ENCODE measurements at regions of chr1 and their contacts with region 1.

Region 1: GRCh38 chr1:201399352-201400126 is 415 bp upstream of the LAD1 start:
- DNase-seq: no peak
- H3K4me3 ChIP-seq: no peak overlapping the region
- H3K27ac ChIP-seq: no peak overlapping the region
- H3K4me1 ChIP-seq: peaks cover 0 to 9% of the 10 kb centered on the region in 2 experiments; a peak in 1 of 4 replicates
- H3K27me3 ChIP-seq: peaks cover 35% of the 10 kb centered on the region; the same call in 1 of the 2 replicates
- CTCF ChIP-seq: no peak
- EP300 ChIP-seq: no peak
- RAD21 ChIP-seq: no peak

Region 2: GRCh38 chr1:201385299-201385891 is 14.1 kb before region 1 on chr1:
- CTCF ChIA-PET with region 1: interaction called, 105 read pairs
- POLR2A ChIA-PET with region 1: no interaction called
- DNase-seq: peak; percentile 82
- H3K4me3 ChIP-seq: no peak overlapping the region; a peak in 1 of 4 replicates
- H3K27ac ChIP-seq: no peak overlapping the region
- H3K4me1 ChIP-seq: peaks cover 5 to 11% of the 10 kb centered on the region in 2 experiments; a peak in 3 of 4 replicates
- H3K27me3 ChIP-seq: no peaks in the 10 kb centered on the region
- CTCF ChIP-seq: peak; percentile 85
- EP300 ChIP-seq: no peak
- RAD21 ChIP-seq: peak; percentile 61

Measured in SK-N-SH (cell line).